Activated CD4-positive, alpha-beta memory T cell treated with anti-CD3 and anti-CD28 coated beads for 36 hours (primary cell): ENCODE measurements at regions of chr10 and their contacts with region 1.

Region 1: GRCh38 chr10:74081192-74081803 is 69.3 kb downstream of the AP3M1 start:
- DNase-seq: peak; percentile 58
- H3K4me3 Mint-ChIP-seq: no peak overlapping the region
- H3K27ac Mint-ChIP-seq: no peak overlapping the region
- H3K4me1 Mint-ChIP-seq: peaks cover 45% of the 10 kb centered on the region
- H3K27me3 Mint-ChIP-seq: no peaks in the 10 kb centered on the region

Region 2: GRCh38 chr10:73997787-73998622 is 83.3 kb before region 1 on chr10 and contains the start of gene VCL:
- CTCF ChIA-PET with region 1: interaction called, 7 read pairs
- POLR2A ChIA-PET with region 1: no interaction called
- intact Hi-C with region 1: loop called (anchors 2 kb)
- DNase-seq: peak; percentile 97
- H3K4me3 Mint-ChIP-seq: peak within 1 kb of the TSS; percentile 91
- H3K27ac Mint-ChIP-seq: peak within 1 kb of the TSS; percentile 89
- H3K4me1 Mint-ChIP-seq: peaks cover 33% of the 10 kb centered on the region
- H3K27me3 Mint-ChIP-seq: no peaks in the 10 kb centered on the region
- total RNA-seq, gene VCL: 27.8 to 29.2 TPM

Region 3: DNA sequence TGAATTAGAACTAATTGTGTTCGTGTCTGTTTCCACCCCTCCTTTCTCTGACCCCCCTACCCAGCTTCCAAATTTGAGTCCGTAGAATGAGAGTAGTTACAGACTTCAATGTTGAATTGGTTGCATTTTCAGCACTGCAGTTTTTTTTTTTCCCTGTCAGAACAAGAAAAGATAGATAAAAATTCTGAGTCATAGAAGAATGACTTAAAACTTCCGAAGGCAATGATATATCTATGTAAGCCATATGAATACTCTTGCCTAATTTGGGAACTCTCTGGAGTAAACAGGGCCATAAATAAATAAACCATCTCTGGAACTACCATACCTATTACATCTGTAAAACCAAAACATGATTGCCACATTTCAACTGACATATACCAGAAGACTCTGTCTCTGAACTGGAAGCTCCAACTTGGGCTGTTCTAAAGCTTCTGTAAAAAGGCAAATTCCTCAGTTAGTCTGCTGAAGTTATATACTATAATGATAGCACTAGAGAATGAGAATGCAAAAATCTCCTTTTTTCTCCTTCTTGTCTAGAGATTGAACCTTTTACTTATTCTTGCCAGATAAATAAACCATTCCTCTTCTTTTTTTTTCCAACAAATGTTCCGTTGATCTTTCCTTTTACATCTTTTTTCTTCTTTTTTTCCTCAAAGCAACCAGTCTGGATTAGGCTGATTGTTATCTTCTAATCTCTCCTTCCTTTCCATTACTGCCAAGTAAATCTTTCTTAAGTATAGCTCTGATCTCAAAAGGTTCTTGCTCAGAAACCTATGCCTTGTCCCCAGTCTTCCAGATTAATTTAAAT is 59.8 kb before region 1 on chr10:
- CTCF ChIA-PET with region 1: interaction called, 7 read pairs
- POLR2A ChIA-PET with region 1: no interaction called
- intact Hi-C with region 1: loop called (anchors 2 kb)
- DNase-seq: peak; percentile 18
- H3K4me3 Mint-ChIP-seq: peak overlapping the region; percentile 22
- H3K27ac Mint-ChIP-seq: peak overlapping the region; percentile 79
- H3K4me1 Mint-ChIP-seq: peaks cover 37% of the 10 kb centered on the region
- H3K27me3 Mint-ChIP-seq: no peaks in the 10 kb centered on the region

Region 4: DNA sequence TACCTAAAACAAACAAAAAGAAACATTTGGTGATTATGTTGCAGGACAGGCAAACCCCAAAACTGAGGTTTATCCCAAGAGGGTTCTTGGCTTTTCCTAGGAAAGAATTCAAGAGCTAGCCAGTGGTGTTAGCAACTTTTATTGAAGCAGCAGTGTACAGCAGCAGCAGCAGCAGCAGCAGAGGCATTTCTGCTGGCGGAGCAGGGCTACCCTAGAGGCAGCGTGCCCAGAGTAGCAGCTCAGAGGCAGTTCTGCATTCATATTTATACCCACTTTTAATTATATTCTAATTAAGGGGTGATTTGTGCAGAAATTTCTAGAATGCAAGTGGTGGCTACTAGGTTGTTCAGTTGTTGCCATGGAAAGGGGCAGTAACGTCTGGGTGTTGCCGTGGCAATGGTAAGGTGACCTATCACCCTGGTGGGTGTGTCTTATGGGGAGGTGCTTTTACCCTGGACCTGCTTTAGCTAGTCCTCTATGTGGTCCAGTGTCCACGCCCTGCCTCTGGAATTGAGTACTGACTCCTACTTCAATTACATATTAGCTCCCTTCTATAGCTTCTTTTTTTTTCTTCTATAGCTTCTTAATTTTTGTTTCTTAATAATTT is 29.5 kb before region 1 on chr10:
- CTCF ChIA-PET with region 1: interaction called, 20 read pairs
- POLR2A ChIA-PET with region 1: interaction called, 3 read pairs
- intact Hi-C with region 1: loop called (anchors 1 kb)
- DNase-seq: no peak
- H3K4me3 Mint-ChIP-seq: no peak overlapping the region
- H3K27ac Mint-ChIP-seq: no peak overlapping the region
- H3K4me1 Mint-ChIP-seq: peaks cover 20% of the 10 kb centered on the region
- H3K27me3 Mint-ChIP-seq: no peaks in the 10 kb centered on the region

Region 5: DNA sequence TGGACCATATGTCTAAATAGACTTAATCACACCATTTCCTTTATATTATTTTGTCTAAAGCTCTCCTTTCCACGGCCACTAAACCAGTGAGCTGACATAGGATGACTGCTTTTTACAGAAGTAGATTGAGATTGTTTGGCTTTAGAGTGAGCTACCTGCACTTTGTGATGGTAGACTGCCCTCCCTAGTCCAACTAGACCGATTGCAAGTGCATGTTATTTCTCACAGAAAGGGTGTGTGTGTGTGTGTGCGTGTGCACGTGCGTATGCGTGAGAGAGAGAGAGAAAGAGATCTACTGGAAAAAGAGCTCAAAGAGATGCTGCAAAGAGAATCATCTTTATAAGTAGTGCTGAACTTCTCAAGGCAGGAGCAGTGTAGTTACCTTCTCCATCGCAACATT is 22.6 kb before region 1 on chr10:
- CTCF ChIA-PET with region 1: interaction called, 20 read pairs
- POLR2A ChIA-PET with region 1: interaction called, 3 read pairs
- intact Hi-C with region 1: loop called (anchors 1 kb)
- DNase-seq: peak; percentile 38
- H3K4me3 Mint-ChIP-seq: no peak overlapping the region
- H3K27ac Mint-ChIP-seq: peak overlapping the region; percentile 16
- H3K4me1 Mint-ChIP-seq: peaks cover 33% of the 10 kb centered on the region
- H3K27me3 Mint-ChIP-seq: no peaks in the 10 kb centered on the region

Region 6: DNA sequence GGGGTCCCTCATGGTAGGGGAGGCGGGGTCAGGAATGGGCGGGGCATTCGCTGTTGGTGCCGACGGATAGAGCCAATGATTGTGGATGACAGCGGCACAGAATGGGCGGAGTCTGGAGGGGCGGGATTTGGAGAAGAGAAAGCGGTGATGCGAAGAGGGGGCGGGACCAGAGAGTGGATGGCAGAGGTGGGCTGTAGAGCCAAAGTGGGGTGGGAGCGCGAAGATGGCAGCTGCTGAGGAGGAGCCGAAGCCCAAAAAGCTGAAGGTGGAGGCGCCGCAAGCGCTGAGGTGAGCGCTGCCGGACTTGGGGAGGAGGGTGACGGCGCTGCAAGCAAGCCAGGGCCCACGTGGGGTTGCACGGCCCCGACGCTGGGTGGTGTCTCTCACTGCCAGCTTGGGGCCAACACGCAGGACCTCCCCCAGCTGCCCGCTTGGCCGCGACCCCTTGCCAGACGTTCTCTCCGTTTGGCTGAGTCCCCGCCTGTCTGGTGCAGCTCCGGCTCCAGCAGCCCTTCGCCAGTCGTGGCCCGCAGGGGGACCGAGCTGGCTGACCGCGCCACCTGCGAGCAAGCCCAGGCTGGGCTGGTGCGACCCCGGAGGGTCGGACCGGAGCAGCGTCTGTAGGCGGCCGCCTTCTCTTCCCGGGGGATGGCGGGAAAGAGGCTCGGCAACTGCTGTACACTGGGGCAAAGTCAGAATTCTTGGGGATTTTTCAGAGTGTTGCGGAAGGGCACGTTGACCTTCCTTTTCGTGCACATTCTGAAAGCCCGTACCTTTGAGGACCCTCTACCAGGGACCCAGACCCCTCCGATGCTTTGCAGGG is 70.0 kb after region 1 on chr10 and contains the start of gene ADK:
- CTCF ChIA-PET with region 1: no interaction called
- POLR2A ChIA-PET with region 1: no interaction called
- intact Hi-C with region 1: no loop called
- DNase-seq: peak; percentile 100
- H3K4me3 Mint-ChIP-seq: no peak within 1 kb of the TSS
- H3K27ac Mint-ChIP-seq: no peak within 1 kb of the TSS
- H3K4me1 Mint-ChIP-seq: peaks cover 39% of the 10 kb centered on the region
- H3K27me3 Mint-ChIP-seq: no peaks in the 10 kb centered on the region
- total RNA-seq, gene ADK: 52.8 to 54.4 TPM